HepG2 (cell line): ENCODE measurements at regions of chr16 and their contacts with region 1.

Region 1: GRCh38 chr16:70162041-70162451 is 11.5 kb upstream of the CLEC18C start:
- DNase-seq: peak; percentile 77
- ATAC-seq: peak; percentile 1; the same call in 1 of the 3 replicates
- H3K4me3 ChIP-seq: no peak overlapping the region
- H3K27ac ChIP-seq: peak overlapping the region; percentile 24
- H3K4me1 ChIP-seq: peaks cover 61% of the 10 kb centered on the region
- H3K27me3 ChIP-seq: no peaks in the 10 kb centered on the region
- CTCF ChIP-seq: no peak
- EP300 ChIP-seq: no peak
- POLR2A ChIP-seq: peak in 1 of 2 experiments; percentile 25; a peak in 1 of 4 replicates
- RAD21 ChIP-seq: no peak

Region 2: DNA sequence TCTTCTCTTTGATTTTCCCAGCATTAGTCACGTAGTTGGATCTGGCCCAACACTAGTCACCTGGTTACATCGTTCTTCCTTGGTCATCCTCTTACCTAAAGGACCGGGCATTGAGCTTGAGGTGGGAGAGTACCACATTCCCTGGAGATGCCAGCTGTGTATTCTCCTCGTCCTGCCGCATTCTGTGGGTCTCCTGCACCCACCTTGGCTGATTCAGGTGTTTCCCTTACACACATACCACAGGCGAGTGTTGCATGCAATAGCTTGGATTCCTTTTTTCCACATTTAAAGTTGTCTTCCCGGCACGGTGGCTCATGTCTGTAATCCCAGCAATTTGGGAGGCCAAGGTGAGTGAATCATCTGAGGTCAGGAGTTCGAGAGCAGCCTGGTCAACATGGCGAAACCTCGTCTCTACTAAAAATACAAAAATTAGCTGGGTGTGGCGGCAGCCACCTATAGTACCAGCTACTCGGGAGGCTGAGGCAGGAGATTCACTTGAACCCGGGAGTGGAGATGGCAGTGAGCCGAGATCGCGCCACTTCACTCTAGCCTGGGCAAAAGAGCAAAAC is 10.0 kb before region 1 on chr16:
- CTCF ChIA-PET with region 1: no interaction called
- POLR2A ChIA-PET with region 1: interaction called, 12 read pairs
- in situ Hi-C with region 1: no loop called
- intact Hi-C with region 1: no loop called
- DNase-seq: no peak
- ATAC-seq: peak; percentile 5; the same call in 1 of the 3 replicates
- H3K4me3 ChIP-seq: peak overlapping the region in 1 of 3 experiments; percentile 57; a peak in 1 of 6 replicates
- H3K27ac ChIP-seq: peak overlapping the region; percentile 84
- H3K4me1 ChIP-seq: peaks cover 37% of the 10 kb centered on the region
- H3K27me3 ChIP-seq: no peaks in the 10 kb centered on the region
- CTCF ChIP-seq: no peak
- EP300 ChIP-seq: no peak
- POLR2A ChIP-seq: no peak
- RAD21 ChIP-seq: no peak

Region 3: GRCh38 chr16:70267516-70267915 is 105.5 kb after region 1 on chr16:
- CTCF ChIA-PET with region 1: interaction called, 12 read pairs
- POLR2A ChIA-PET with region 1: interaction called, 3 read pairs
- in situ Hi-C with region 1: no loop called
- intact Hi-C with region 1: no loop called
- DNase-seq: peak; percentile 72
- ATAC-seq: peak; percentile 80
- H3K4me3 ChIP-seq: no peak overlapping the region
- H3K27ac ChIP-seq: no peak overlapping the region
- H3K4me1 ChIP-seq: no peaks in the 10 kb centered on the region
- H3K27me3 ChIP-seq: no peaks in the 10 kb centered on the region
- CTCF ChIP-seq: peak; percentile 85
- EP300 ChIP-seq: no peak
- POLR2A ChIP-seq: no peak
- RAD21 ChIP-seq: peak; percentile 58; the same call in 1 of the 2 replicates

Region 4: GRCh38 chr16:70604407-70605283 is 442.6 kb after region 1 on chr16:
- CTCF ChIA-PET with region 1: no interaction called
- POLR2A ChIA-PET with region 1: no interaction called
- in situ Hi-C with region 1: no loop called
- intact Hi-C with region 1: no loop called
- DNase-seq: no peak
- ATAC-seq: peak; percentile 73
- H3K4me3 ChIP-seq: no peak overlapping the region
- H3K27ac ChIP-seq: no peak overlapping the region
- H3K4me1 ChIP-seq: no peaks in the 10 kb centered on the region
- H3K27me3 ChIP-seq: peaks cover 1 to 12% of the 10 kb centered on the region in 2 experiments; a peak in 2 of 5 replicates
- CTCF ChIP-seq: no peak
- EP300 ChIP-seq: no peak
- POLR2A ChIP-seq: no peak
- RAD21 ChIP-seq: no peak